ENCODE measurements at regions of chr6 and their contacts with region 1.

Region 1: GRCh38 chr6:100627911-100628758 is 163.4 kb upstream of the SIM1 start:
- DNase-seq: no peak
- H3K4me3 ChIP-seq: no peak overlapping the region
- H3K27ac ChIP-seq: no peak overlapping the region
- H3K4me1 ChIP-seq: no peaks in the 10 kb centered on the region
- H3K27me3 ChIP-seq: no peaks in the 10 kb centered on the region
- CTCF ChIP-seq: no peak

Region 2: DNA sequence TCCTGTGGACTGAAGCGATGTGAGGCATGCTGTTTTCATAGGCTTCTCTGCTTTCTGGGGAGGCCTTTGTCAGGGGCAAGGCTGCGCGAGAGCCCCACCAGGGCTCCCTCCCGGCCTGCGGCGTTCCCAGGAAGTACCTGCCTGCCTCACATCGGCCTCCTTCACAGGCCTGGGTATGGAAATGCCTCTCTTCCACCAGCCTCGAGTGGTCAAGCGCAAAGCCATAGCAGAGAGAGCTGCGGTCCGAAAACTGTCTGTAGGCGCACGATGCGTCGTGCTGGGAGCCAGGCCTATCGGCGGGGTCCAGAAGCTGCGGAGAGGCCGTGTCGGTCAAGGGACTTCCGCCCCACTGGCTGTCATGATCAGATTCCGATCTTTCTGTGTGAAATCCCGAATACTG is 234.6 kb before region 1 on chr6:
- CTCF ChIA-PET with region 1: no interaction called
- POLR2A ChIA-PET with region 1: no interaction called
- intact Hi-C with region 1: no loop called
- DNase-seq: no peak
- H3K4me3 ChIP-seq: no peak overlapping the region
- H3K27ac ChIP-seq: no peak overlapping the region
- H3K4me1 ChIP-seq: no peaks in the 10 kb centered on the region
- H3K27me3 ChIP-seq: no peaks in the 10 kb centered on the region
- CTCF ChIP-seq: no peak

Region 3: DNA sequence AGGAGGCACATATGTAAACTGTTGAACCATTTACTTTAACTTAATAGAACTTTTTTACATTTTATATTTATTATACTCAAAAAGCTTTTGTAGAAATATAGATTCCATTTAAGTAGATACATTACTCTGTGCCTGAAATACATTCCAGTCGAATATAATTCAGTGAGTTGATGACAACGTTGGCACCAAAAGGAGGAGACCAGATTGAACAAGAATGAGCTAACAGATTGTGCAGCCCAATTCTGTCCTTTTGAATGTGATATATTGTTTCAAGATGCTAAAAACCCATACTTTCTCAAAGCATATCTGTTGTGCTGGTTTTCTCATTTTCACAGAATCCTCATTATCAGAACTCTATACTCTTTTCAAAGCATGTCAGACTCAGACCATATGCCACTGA is 16.0 kb before region 1 on chr6:
- CTCF ChIA-PET with region 1: no interaction called
- POLR2A ChIA-PET with region 1: no interaction called
- intact Hi-C with region 1: loop called (anchors 2 kb)
- DNase-seq: no peak
- H3K4me3 ChIP-seq: no peak overlapping the region
- H3K27ac ChIP-seq: no peak overlapping the region
- H3K4me1 ChIP-seq: no peaks in the 10 kb centered on the region
- H3K27me3 ChIP-seq: no peaks in the 10 kb centered on the region
- CTCF ChIP-seq: no peak

Region 4: GRCh38 chr6:100892693-100893092 is 264.6 kb after region 1 on chr6:
- CTCF ChIA-PET with region 1: no interaction called
- POLR2A ChIA-PET with region 1: no interaction called
- intact Hi-C with region 1: no loop called
- DNase-seq: peak; percentile 56
- H3K4me3 ChIP-seq: no peak overlapping the region
- H3K27ac ChIP-seq: no peak overlapping the region
- H3K4me1 ChIP-seq: no peaks in the 10 kb centered on the region
- H3K27me3 ChIP-seq: no peaks in the 10 kb centered on the region
- CTCF ChIP-seq: no peak